Ascending aorta (tissue), 2 donors: ENCODE measurements at regions of chr17 and their contacts with region 1.

Region 1: GRCh38 chr17:31008374-31009041 is 37.7 kb downstream of the RNF135 start:
- DNase-seq: peak in 1 of 2 donors; percentile 74
- H3K4me3 ChIP-seq: peak overlapping the region; percentile 80
- H3K27ac ChIP-seq: peak overlapping the region; percentile 97
- H3K4me1 ChIP-seq: peaks cover 0 to 12% of the 10 kb centered on the region in 2 donors
- H3K27me3 ChIP-seq: no peaks in the 10 kb centered on the region
- CTCF ChIP-seq: no peak

Region 2: GRCh38 chr17:30970831-30971567 is 37.5 kb before region 1 on chr17 and contains the start of gene RNF135:
- intact Hi-C with region 1: loop called (anchors 2 kb)
- DNase-seq: peak; percentile 37 to 89
- H3K4me3 ChIP-seq: peak within 1 kb of the TSS; percentile 79 to 87
- H3K27ac ChIP-seq: peak within 1 kb of the TSS; percentile 91 to 94
- H3K4me1 ChIP-seq: peaks cover 0 to 3% of the 10 kb centered on the region in 2 donors
- H3K27me3 ChIP-seq: no peaks in the 10 kb centered on the region
- CTCF ChIP-seq: peak in 2 of 3 experiments; percentile 29 to 73
- total RNA-seq, gene RNF135: 4.6 TPM

Region 3: GRCh38 chr17:31216053-31216751 is 207.7 kb after region 1 on chr17:
- intact Hi-C with region 1: loop called (anchors 1 kb)
- DNase-seq: no peak
- H3K4me3 ChIP-seq: no peak overlapping the region
- H3K27ac ChIP-seq: peak overlapping the region; percentile 47 to 74
- H3K4me1 ChIP-seq: peaks cover 0 to 8% of the 10 kb centered on the region in 2 donors
- H3K27me3 ChIP-seq: no peaks in the 10 kb centered on the region
- CTCF ChIP-seq: peak; percentile 41 to 64 (median 48)